Aorta (tissue), 5 donors: ENCODE measurements at regions of chr12 and their contacts with region 1.

Region 1: GRCh38 chr12:98002712-98003493 is 512.5 kb upstream of the TMPO start:
- DNase-seq: peak in 1 of 2 donors; percentile 44
- ATAC-seq: no peak
- H3K4me3 ChIP-seq: no peak overlapping the region
- H3K27ac ChIP-seq: no peak overlapping the region
- H3K4me1 ChIP-seq: peaks cover 0 to 2% of the 10 kb centered on the region in 2 donors
- H3K27me3 ChIP-seq: no peaks in the 10 kb centered on the region

Region 2: DNA sequence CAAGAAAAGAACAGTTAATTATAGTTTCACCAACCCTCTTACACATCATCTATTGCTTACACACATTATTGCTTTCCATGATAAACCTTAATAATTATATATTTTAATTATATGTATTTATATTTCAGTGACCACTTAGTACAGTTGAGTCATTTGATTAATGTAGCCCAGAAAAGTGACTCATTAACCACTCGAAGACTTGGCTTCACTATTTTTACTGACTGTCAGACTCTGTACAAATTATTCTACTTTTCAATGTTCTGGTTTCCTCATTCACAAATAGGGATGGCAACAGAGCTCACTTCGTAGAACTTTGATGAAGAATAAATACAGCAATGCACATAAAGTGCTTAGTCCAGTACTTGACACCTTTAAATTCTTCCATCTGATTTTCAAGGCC is 1415.2 kb before region 1 on chr12:
- intact Hi-C with region 1: loop called in 1 of 2 experiments (anchors 10 kb)
- DNase-seq: no peak
- ATAC-seq: no peak
- H3K4me3 ChIP-seq: no peak overlapping the region
- H3K27ac ChIP-seq: no peak overlapping the region
- H3K4me1 ChIP-seq: no peaks in the 10 kb centered on the region
- H3K27me3 ChIP-seq: no peaks in the 10 kb centered on the region

Region 3: GRCh38 chr12:97681612-97682504 is 321.0 kb before region 1 on chr12:
- intact Hi-C with region 1: no loop called
- DNase-seq: no peak
- ATAC-seq: no peak
- H3K4me3 ChIP-seq: no peak overlapping the region
- H3K27ac ChIP-seq: no peak overlapping the region
- H3K4me1 ChIP-seq: no peaks in the 10 kb centered on the region
- H3K27me3 ChIP-seq: no peaks in the 10 kb centered on the region

Region 4: GRCh38 chr12:97716356-97716755 is 286.5 kb before region 1 on chr12:
- intact Hi-C with region 1: loop called in 1 of 2 experiments (anchors 10 kb)
- DNase-seq: no peak
- ATAC-seq: no peak
- H3K4me3 ChIP-seq: no peak overlapping the region
- H3K27ac ChIP-seq: no peak overlapping the region
- H3K4me1 ChIP-seq: no peaks in the 10 kb centered on the region
- H3K27me3 ChIP-seq: no peaks in the 10 kb centered on the region